PC-9 (cell line): ENCODE measurements at regions of chr3 and their contacts with region 1.

Region 1: GRCh38 chr3:108090701-108091451 is at the start of gene CD47:
- DNase-seq: peak; percentile 72 to 97
- H3K4me3 ChIP-seq: peak within 1 kb of the TSS; percentile 93
- H3K27ac ChIP-seq: 0 out of 2 replicates have a peak within 1 kb of the TSS, but pooled peaks have one; percentile 0
- H3K4me1 ChIP-seq: peaks cover 32% of the 10 kb centered on the region
- H3K27me3 ChIP-seq: no peaks in the 10 kb centered on the region
- CTCF ChIP-seq: no peak
- total RNA-seq, gene CD47: 74.8 and 76.9 TPM in 2 replicates

Region 2: DNA sequence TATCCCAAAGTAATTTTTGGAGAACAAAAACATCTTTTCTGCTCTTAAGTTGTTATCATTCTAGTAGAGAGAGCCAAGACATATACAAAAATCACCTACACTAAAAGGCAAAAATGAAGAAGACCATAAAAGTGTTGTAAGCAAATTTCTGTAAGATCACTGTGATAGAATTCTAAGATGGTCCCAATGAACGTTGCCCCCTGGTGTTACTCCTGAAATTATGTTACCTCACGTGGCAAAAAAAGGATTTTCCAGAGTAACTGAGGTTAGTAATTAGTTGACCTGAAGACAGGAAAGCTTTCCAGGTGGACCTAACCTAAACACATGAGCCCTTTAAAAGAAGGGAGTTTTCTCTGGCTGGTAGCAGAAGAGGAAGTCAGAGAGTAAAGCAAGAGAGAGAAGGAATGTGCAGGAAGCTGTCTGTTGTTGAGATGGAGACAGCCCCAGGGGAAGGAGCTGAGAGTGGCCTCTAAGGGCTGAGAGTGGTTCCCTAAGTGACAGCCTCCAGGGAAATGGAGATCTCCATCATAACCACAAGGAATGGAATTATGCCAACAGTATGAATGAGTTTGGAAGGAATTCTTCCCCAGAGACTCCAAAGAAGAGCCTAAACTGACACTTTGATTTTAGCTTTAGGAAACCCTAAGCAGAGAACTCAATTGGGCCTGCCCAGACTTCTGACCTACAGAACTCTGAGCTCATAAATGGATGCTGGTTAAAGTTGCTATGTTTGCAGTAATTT is 206.0 kb before region 1 on chr3:
- CTCF ChIA-PET with region 1: interaction called, 10 read pairs
- POLR2A ChIA-PET with region 1: no interaction called
- intact Hi-C with region 1: no loop called
- DNase-seq: no peak
- H3K4me3 ChIP-seq: no peak overlapping the region
- H3K27ac ChIP-seq: no peak overlapping the region
- H3K4me1 ChIP-seq: no peaks in the 10 kb centered on the region
- H3K27me3 ChIP-seq: no peaks in the 10 kb centered on the region
- CTCF ChIP-seq: peak; percentile 37; the same call in 1 of the 2 replicates

Region 3: DNA sequence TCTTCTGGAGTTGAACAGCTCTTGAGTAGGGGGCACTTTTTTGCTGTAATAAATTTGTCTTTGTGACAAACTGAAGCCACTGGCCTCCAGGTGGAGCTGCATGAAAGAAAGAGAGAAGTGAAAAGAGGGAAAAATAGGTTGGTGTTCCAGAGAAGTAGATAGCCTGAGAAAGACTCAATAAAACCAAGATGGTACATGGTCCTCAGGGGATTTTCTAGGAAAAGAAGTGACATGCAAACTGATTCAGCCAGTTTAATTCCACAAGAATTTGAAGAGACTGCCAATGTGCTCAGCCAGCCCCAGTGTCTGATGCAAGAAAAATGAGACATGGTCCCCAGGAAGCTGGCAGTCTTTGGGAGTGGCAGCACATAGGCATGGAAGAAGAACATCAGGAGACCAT is 152.7 kb before region 1 on chr3:
- CTCF ChIA-PET with region 1: no interaction called
- POLR2A ChIA-PET with region 1: no interaction called
- intact Hi-C with region 1: loop called (anchors 2 kb)
- DNase-seq: peak; percentile 48 to 58
- H3K4me3 ChIP-seq: no peak overlapping the region
- H3K27ac ChIP-seq: no peak overlapping the region
- H3K4me1 ChIP-seq: no peaks in the 10 kb centered on the region
- H3K27me3 ChIP-seq: no peaks in the 10 kb centered on the region
- CTCF ChIP-seq: peak; percentile 89

Region 4: GRCh38 chr3:107969994-107970819 is 120.7 kb before region 1 on chr3:
- CTCF ChIA-PET with region 1: no interaction called
- POLR2A ChIA-PET with region 1: no interaction called
- intact Hi-C with region 1: no loop called
- DNase-seq: peak; percentile 22 to 61
- H3K4me3 ChIP-seq: no peak overlapping the region
- H3K27ac ChIP-seq: no peak overlapping the region
- H3K4me1 ChIP-seq: peaks cover 10% of the 10 kb centered on the region
- H3K27me3 ChIP-seq: no peaks in the 10 kb centered on the region
- CTCF ChIP-seq: no peak

Region 5: DNA sequence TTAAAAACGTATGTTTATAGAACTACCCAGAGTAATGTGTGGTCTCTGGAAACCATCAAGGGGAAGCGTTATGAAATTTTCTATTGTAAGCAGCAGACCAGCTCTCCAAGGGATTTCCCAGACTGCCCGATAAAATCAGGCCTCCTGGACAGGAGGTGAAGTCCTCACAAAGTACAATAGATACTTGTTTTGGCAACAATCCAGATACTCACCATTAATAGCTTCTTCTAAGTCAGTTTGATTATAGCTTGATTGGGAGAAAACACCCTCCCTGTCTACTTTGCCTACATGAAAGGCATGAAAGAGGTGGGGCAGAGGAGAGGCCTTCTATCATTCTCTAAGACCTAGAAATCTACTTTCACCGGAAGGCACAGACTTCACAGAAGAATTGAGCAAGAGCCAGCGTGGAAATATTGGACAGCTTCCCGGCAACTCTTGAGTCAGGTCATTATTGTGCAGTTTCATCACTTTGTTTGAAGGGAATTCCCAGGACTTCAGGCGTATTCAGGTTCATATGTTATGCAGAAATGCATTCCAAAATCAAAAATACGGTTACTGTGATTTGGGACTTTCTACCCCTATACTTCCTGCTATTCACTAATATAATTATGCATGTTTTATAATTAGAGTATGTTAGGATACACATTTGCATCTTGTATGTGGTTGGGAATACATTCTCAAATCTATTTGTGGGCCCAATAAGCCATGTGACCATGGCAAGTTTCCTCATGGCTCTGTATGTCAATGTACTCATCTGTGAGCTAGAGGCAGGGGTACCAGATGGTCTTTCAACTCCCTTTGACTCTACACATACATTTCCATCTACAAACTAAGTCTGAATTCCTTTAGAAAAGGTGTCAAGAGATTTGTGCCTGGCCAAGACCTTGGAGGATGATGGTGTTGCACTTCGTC is 103.6 kb before region 1 on chr3:
- CTCF ChIA-PET with region 1: no interaction called
- POLR2A ChIA-PET with region 1: no interaction called
- intact Hi-C with region 1: loop called (anchors 5 kb)
- DNase-seq: peak; percentile 81 to 97
- H3K4me3 ChIP-seq: no peak overlapping the region
- H3K27ac ChIP-seq: peak overlapping the region; percentile 83
- H3K4me1 ChIP-seq: peaks cover 56% of the 10 kb centered on the region
- H3K27me3 ChIP-seq: no peaks in the 10 kb centered on the region
- CTCF ChIP-seq: no peak

Region 6: DNA sequence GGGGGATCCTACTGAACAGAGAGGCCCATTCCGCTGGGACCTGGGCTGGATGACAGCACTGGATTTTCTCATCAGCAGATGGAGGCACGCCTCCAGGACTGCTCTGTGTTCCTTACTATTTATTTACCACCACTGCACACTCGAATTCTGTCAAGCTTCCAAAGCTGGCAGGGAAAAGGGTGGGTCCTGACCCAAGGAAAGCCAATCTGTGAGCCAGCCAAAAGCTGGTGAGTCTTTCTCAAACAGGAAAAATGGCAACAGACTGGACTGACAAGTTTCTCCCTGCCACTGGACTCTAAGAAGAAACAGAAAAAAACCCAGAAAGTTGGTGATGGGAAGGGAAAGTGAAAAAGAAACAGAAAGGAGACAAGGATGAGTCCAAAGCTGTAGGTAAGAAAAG is 37.8 kb before region 1 on chr3:
- CTCF ChIA-PET with region 1: interaction called, 6 read pairs
- POLR2A ChIA-PET with region 1: no interaction called
- intact Hi-C with region 1: loop called (anchors 2 kb)
- DNase-seq: peak; percentile 73 to 76
- H3K4me3 ChIP-seq: no peak overlapping the region
- H3K27ac ChIP-seq: 0 out of 2 replicates have a peak overlapping the region, but pooled peaks have one; percentile 0
- H3K4me1 ChIP-seq: peaks cover 13% of the 10 kb centered on the region
- H3K27me3 ChIP-seq: no peaks in the 10 kb centered on the region
- CTCF ChIP-seq: no peak

Region 7: DNA sequence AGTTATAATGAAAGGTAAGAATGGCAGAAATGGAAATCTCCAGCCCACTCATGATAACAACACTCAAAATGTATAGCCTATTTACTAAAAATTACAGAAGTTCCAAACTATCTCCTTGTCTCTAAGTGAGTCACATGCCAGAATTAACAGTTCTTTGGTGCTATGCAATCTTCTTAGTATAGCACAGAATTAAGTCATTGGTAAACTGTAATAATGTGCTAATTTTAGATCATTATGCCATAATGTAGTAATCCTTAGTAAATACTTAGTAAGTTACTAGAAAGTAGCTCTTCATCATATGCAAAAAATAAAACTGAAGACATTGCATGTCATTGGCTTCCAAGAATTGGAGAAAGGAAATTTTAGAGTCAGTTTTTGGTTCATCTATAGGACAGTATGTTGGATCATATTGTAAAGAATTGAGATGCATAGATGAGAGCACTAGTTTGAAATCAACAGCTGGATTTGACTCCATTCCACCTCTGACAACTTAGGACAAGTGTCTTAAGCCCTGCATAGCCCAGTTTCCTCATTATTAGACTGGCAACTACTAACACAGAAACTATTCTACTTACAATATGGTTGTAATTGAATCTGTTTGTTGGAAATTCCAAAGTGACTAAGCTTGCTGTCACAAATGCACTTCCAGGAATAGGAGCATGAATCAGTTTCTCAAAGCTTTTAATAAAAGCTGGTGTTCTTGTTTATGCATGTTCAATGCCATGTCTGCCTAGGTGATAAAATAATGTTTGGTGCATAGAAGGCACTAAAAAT is 40.0 kb after region 1 on chr3:
- CTCF ChIA-PET with region 1: interaction called, 4 read pairs
- POLR2A ChIA-PET with region 1: no interaction called
- intact Hi-C with region 1: loop called (anchors 1 kb)
- DNase-seq: peak; percentile 15 to 99
- H3K4me3 ChIP-seq: no peak overlapping the region
- H3K27ac ChIP-seq: peak overlapping the region; percentile 84
- H3K4me1 ChIP-seq: peaks cover 46% of the 10 kb centered on the region
- H3K27me3 ChIP-seq: no peaks in the 10 kb centered on the region
- CTCF ChIP-seq: no peak

Region 8: GRCh38 chr3:108153451-108153981 is 62.6 kb after region 1 on chr3:
- CTCF ChIA-PET with region 1: no interaction called
- POLR2A ChIA-PET with region 1: no interaction called
- intact Hi-C with region 1: loop called (anchors 5 kb)
- DNase-seq: peak; percentile 54 to 75
- H3K4me3 ChIP-seq: no peak overlapping the region
- H3K27ac ChIP-seq: no peak overlapping the region
- H3K4me1 ChIP-seq: no peaks in the 10 kb centered on the region; the same call in 1 of the 2 replicates
- H3K27me3 ChIP-seq: no peaks in the 10 kb centered on the region
- CTCF ChIP-seq: peak; percentile 59

Region 9: DNA sequence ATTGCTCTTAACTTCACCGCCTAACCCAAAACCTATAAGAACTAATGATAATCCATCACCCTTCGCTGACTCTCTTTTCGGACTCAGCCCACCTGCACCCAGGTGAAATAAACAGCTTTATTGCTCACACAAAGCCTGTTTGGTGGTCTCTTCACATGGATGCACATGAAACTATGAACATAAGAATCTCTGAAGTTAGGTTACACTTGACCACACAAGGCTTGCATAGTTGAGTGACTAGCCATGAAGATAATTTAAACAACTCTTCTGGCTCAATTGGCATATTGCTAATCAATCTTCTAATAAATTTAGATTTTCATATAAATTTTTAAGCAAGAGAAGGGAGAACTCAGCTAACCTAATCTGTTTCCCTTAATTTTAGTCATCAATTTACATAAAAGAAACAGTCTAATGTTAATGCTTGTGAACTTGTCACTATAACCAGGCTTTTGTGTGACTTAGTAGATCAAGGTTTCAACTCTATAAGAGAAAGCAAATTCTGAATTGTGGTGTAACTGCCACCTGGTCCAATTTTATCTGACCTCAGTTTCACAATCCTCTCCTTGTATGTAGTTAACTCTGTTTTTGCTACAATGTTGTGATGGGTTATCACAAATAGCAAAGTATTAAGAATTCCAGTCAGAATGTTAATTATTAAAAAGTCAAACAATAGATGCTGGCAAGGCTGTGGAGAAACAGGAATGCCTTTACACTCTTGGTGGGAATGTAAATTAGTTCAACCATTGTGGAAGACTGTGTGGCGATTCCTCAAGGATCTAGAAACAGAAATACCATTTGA is 287.5 kb after region 1 on chr3:
- CTCF ChIA-PET with region 1: no interaction called
- POLR2A ChIA-PET with region 1: no interaction called
- intact Hi-C with region 1: no loop called
- DNase-seq: no peak
- H3K4me3 ChIP-seq: no peak overlapping the region
- H3K27ac ChIP-seq: no peak overlapping the region
- H3K4me1 ChIP-seq: no peaks in the 10 kb centered on the region
- H3K27me3 ChIP-seq: no peaks in the 10 kb centered on the region
- CTCF ChIP-seq: no peak